Heart right ventricle (tissue), 16 donors: ENCODE measurements at regions of chr4 and their contacts with region 1.

Region 1: GRCh38 chr4:56435306-56435926 is at the start of gene PPAT:
- DNase-seq: peak; percentile 97 to 98
- ATAC-seq: peak; percentile 96 to 99 (median 97)
- H3K4me3 ChIP-seq: peak within 1 kb of the TSS; percentile 55 to 83 (median 73)
- H3K27ac ChIP-seq: peak within 1 kb of the TSS; percentile 72 to 99 (median 91)
- H3K4me1 ChIP-seq: peaks cover 0 to 27% (median 18%) of the 10 kb centered on the region in 9 donors
- H3K27me3 ChIP-seq: no peaks in the 10 kb centered on the region
- CTCF ChIP-seq: peak in 8 of 9 donors; percentile 22 to 65 (median 46)
- total RNA-seq, gene PPAT: 1.8 to 5.2 (median 3.1) TPM

Region 2: GRCh38 chr4:56387023-56388001 is 48.1 kb before region 1 on chr4 and contains the start of gene AASDH:
- intact Hi-C with region 1: loop called in 4 of 10 experiments (anchors 1 to 5 kb)
- DNase-seq: peak; percentile 93 to 94
- ATAC-seq: peak; percentile 97 to 99 (median 98)
- H3K4me3 ChIP-seq: peak within 1 kb of the TSS; percentile 51 to 88 (median 69)
- H3K27ac ChIP-seq: peak within 1 kb of the TSS; percentile 71 to 98 (median 94)
- H3K4me1 ChIP-seq: peaks cover 4 to 27% (median 18%) of the 10 kb centered on the region in 9 donors
- H3K27me3 ChIP-seq: no peaks in the 10 kb centered on the region
- CTCF ChIP-seq: no peak
- total RNA-seq, gene AASDH: 4.8 to 8.7 (median 6.7) TPM

Region 3: GRCh38 chr4:56400560-56400959 is 34.9 kb before region 1 on chr4:
- intact Hi-C with region 1: no loop called
- DNase-seq: no peak
- ATAC-seq: no peak
- H3K4me3 ChIP-seq: no peak overlapping the region
- H3K27ac ChIP-seq: no peak overlapping the region
- H3K4me1 ChIP-seq: no peaks in the 10 kb centered on the region
- H3K27me3 ChIP-seq: no peaks in the 10 kb centered on the region
- CTCF ChIP-seq: no peak

Region 4: GRCh38 chr4:56467284-56468096 is 32.1 kb after region 1 on chr4 and contains the start of gene SRP72:
- intact Hi-C with region 1: loop called in 2 of 10 experiments (anchors 1 to 5 kb)
- DNase-seq: peak; percentile 85 to 88
- ATAC-seq: peak; percentile 97 to 99 (median 98)
- H3K4me3 ChIP-seq: peak within 1 kb of the TSS; percentile 83 to 99 (median 91)
- H3K27ac ChIP-seq: peak within 1 kb of the TSS; percentile 49 to 93 (median 88)
- H3K4me1 ChIP-seq: peaks cover 5 to 47% (median 38%) of the 10 kb centered on the region in 9 donors
- H3K27me3 ChIP-seq: no peaks in the 10 kb centered on the region
- CTCF ChIP-seq: no peak
- total RNA-seq, gene SRP72: 36.7 to 54.5 (median 41.8) TPM

Region 5: DNA sequence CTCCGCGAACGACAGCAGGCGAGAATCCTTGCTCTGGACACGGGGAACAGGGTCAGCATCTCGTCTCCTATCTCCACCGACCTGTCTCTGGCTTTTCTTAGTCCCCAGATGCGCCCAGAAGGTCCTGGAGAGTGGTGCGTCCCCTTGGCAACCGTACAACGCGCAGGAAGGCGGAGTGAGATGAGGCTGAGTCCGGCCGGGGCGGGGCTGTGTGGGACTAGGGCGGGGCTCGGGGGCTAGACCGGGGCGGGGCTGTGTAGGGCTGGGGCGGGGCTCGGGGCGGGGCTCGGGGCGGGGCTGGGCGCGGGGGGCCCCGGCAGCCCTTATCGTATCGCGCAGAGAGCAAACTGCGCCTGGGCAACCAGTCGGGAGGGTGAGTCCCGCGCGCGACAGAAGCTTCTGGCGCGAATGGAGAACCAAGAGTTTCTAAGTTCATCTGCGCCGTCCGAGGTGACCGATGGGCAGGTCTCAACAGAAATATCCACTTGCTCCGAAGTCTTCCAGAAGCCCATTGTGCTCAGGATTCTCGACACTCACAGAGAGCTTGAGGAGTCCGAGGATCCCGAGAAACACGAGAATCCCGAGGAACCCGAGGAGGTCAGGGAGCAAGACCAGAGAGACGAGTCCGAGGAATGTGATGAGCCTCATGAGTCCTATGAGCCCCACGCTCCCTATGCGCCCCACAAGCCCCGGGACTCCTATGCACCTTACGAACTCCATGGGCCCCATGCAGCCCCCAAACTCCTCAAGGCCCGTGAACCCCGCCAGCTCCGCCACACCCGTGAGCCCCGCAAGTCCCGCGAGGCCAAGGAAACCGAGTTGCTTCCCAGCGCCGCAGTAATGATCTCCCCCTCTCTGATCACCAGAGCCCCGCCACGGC is 95.1 kb after region 1 on chr4:
- intact Hi-C with region 1: loop called in 2 of 10 experiments (anchors 5 to 10 kb)
- DNase-seq: peak; percentile 83 to 88
- ATAC-seq: peak; percentile 97 to 99 (median 98)
- H3K4me3 ChIP-seq: peak overlapping the region; percentile 39 to 71 (median 58)
- H3K27ac ChIP-seq: no peak overlapping the region
- H3K4me1 ChIP-seq: peaks cover 0 to 15% (median 8%) of the 10 kb centered on the region in 9 donors
- H3K27me3 ChIP-seq: peaks cover 0 to 44% (median 17%) of the 10 kb centered on the region in 7 donors
- CTCF ChIP-seq: no peak

Region 6: GRCh38 chr4:56804551-56804950 is 369.1 kb after region 1 on chr4:
- intact Hi-C with region 1: no loop called
- DNase-seq: no peak
- ATAC-seq: no peak
- H3K4me3 ChIP-seq: no peak overlapping the region
- H3K27ac ChIP-seq: no peak overlapping the region
- H3K4me1 ChIP-seq: peaks cover 0 to 5% (median 1%) of the 10 kb centered on the region in 9 donors
- H3K27me3 ChIP-seq: peaks cover 0 to 3% (median 0%) of the 10 kb centered on the region in 7 donors
- CTCF ChIP-seq: no peak

Region 7: DNA sequence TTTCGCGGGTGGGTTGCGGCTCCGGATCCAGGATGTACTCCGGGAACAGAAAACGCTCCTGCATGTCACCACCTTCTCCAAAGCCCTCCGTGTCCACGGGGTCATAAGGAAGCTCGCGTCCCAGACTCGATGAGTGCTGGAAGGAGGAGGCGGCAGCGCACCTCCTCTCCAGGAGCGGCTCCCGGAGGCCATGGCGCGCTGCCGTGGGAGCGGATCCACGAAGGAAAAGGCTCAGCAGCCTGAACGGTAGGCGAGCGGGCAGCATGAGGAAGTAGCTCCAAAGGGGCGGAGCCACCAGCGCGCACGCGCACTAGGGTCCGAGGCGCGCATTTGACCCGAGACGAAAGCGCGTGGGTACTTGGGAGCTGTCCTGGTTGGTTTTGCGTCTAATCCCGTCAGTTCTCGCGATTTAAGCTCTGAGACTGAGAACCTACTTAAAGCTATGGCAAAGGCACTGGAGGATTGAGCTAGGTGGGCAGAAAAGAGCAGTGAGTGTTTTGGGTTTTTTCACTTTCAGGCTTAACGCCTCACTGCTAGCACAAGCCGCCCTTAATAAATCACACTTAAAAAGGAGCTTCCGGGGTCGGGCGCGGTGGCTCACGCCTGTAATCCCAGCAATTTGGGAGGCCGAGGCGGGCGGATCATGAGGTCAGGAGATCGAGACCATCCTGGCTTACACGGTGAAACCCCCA is 542.1 kb after region 1 on chr4 and contains the start of gene NOA1:
- intact Hi-C with region 1: loop called in 1 of 10 experiments (anchors 5 kb)
- DNase-seq: peak; percentile 98
- ATAC-seq: peak; percentile 91 to 95 (median 93)
- H3K4me3 ChIP-seq: peak within 1 kb of the TSS; percentile 69 to 98 (median 83)
- H3K27ac ChIP-seq: peak within 1 kb of the TSS; percentile 68 to 94 (median 89)
- H3K4me1 ChIP-seq: peaks cover 0 to 63% (median 53%) of the 10 kb centered on the region in 9 donors
- H3K27me3 ChIP-seq: no peaks in the 10 kb centered on the region
- CTCF ChIP-seq: no peak
- total RNA-seq, gene NOA1: 11.0 to 14.7 (median 12.6) TPM